HepG2 (cell line): ENCODE measurements at regions of chr17 and their contacts with region 1.

Region 1: DNA sequence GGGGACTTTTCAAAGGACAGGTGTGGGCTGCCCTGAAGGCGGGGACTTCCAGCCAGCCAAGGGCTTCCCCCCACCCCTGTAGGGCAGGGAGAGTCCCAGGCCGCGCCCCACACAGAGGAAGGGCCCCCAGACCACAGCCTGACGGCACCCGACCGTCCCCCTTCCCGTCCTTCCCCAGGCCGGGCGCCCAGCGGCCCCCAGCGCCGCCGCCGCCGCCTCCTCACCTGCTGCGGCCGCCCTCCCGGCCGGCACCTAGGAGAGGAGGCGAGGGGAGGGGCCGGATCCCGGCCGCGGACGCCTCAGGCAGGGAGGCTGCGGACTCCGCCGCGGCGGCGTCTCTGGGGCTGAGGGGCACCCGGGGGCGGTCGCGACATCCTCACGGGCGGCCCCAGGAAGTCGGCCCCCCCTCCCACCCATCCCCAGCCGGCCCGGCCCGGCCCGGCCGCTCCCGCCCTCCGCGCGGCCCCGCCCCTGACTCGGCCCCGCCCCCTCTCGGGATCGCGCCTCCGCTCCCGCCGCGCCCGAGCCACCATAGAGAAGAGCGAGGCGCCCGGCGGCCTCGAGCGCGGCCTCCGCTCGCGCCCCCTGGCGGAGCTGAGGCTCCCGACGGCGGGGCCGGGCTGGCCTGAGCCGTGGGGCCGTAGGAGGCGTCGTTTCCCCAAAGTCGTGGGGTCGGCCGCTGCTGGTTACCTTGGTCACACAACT is 25.5 kb upstream of the RFFL start:
- DNase-seq: peak; percentile 64
- ATAC-seq: peak; percentile 85
- H3K4me3 ChIP-seq: peak overlapping the region; percentile 71 to 92 (median 72)
- H3K27ac ChIP-seq: peak overlapping the region; percentile 83
- H3K4me1 ChIP-seq: peaks cover 43% of the 10 kb centered on the region
- H3K27me3 ChIP-seq: no peaks in the 10 kb centered on the region
- CTCF ChIP-seq: peak; percentile 83
- EP300 ChIP-seq: no peak
- POLR2A ChIP-seq: peak in 1 of 2 experiments; percentile 62; a peak in 1 of 4 replicates
- RAD21 ChIP-seq: peak; percentile 93

Region 2: GRCh38 chr17:34980681-34981537 is 108.1 kb before region 1 on chr17:
- CTCF ChIA-PET with region 1: no interaction called
- POLR2A ChIA-PET with region 1: interaction called, 12 read pairs
- in situ Hi-C with region 1: no loop called
- intact Hi-C with region 1: no loop called
- DNase-seq: peak; percentile 83
- ATAC-seq: peak; percentile 93
- H3K4me3 ChIP-seq: peak overlapping the region; percentile 73 to 87 (median 86)
- H3K27ac ChIP-seq: peak overlapping the region; percentile 98
- H3K4me1 ChIP-seq: peaks cover 44% of the 10 kb centered on the region
- H3K27me3 ChIP-seq: no peaks in the 10 kb centered on the region
- CTCF ChIP-seq: peak; percentile 56
- EP300 ChIP-seq: no peak
- POLR2A ChIP-seq: peak; percentile 29 to 87
- RAD21 ChIP-seq: no peak; the same call in 1 of the 2 replicates

Region 3: GRCh38 chr17:35022536-35023063 is 66.4 kb before region 1 on chr17:
- CTCF ChIA-PET with region 1: no interaction called
- POLR2A ChIA-PET with region 1: no interaction called
- in situ Hi-C with region 1: no loop called
- intact Hi-C with region 1: loop called (anchors 5 kb)
- DNase-seq: peak; percentile 24
- ATAC-seq: peak; percentile 42; the same call in 2 of the 3 replicates
- H3K4me3 ChIP-seq: no peak overlapping the region
- H3K27ac ChIP-seq: no peak overlapping the region
- H3K4me1 ChIP-seq: no peaks in the 10 kb centered on the region
- H3K27me3 ChIP-seq: no peaks in the 10 kb centered on the region
- CTCF ChIP-seq: no peak
- EP300 ChIP-seq: no peak
- POLR2A ChIP-seq: no peak
- RAD21 ChIP-seq: no peak

Region 4: GRCh38 chr17:35063514-35064223 is 25.4 kb before region 1 on chr17 and contains the start of gene RFFL:
- CTCF ChIA-PET with region 1: no interaction called
- POLR2A ChIA-PET with region 1: interaction called, 43 read pairs
- in situ Hi-C with region 1: no loop called
- intact Hi-C with region 1: loop called (anchors 1 kb)
- DNase-seq: peak; percentile 98
- ATAC-seq: peak; percentile 99
- H3K4me3 ChIP-seq: peak within 1 kb of the TSS; percentile 15 to 50 (median 35)
- H3K27ac ChIP-seq: peak within 1 kb of the TSS; percentile 95
- H3K4me1 ChIP-seq: peaks cover 96% of the 10 kb centered on the region
- H3K27me3 ChIP-seq: no peaks in the 10 kb centered on the region
- CTCF ChIP-seq: peak; percentile 80
- EP300 ChIP-seq: peak; percentile 86 to 88; a peak in 3 of 4 replicates
- POLR2A ChIP-seq: peak; percentile 60 to 87
- RAD21 ChIP-seq: peak; percentile 59; the same call in 1 of the 2 replicates
- total RNA-seq, gene RFFL: 24.3 and 36.7 TPM in 2 replicates

Region 5: GRCh38 chr17:35119368-35120165 is 30.5 kb after region 1 on chr17 and contains the start of gene RAD51D:
- CTCF ChIA-PET with region 1: interaction called, 8 read pairs
- POLR2A ChIA-PET with region 1: interaction called, 7 read pairs
- in situ Hi-C with region 1: no loop called
- intact Hi-C with region 1: loop called (anchors 2 kb)
- DNase-seq: peak; percentile 60
- ATAC-seq: peak; percentile 88
- H3K4me3 ChIP-seq: peak within 1 kb of the TSS; percentile 80 to 94 (median 86)
- H3K27ac ChIP-seq: peak within 1 kb of the TSS; percentile 63
- H3K4me1 ChIP-seq: peaks cover 29% of the 10 kb centered on the region
- H3K27me3 ChIP-seq: no peaks in the 10 kb centered on the region; a peak in 1 of 5 replicates
- CTCF ChIP-seq: peak; percentile 89
- EP300 ChIP-seq: no peak
- POLR2A ChIP-seq: peak in 1 of 2 experiments; percentile 61; a peak in 3 of 4 replicates
- RAD21 ChIP-seq: peak; percentile 99
- total RNA-seq, gene RAD51D: 12.9 and 13.1 TPM in 2 replicates